ENCODE measurements at regions of chr5 and their contacts with region 1.

Region 1: DNA sequence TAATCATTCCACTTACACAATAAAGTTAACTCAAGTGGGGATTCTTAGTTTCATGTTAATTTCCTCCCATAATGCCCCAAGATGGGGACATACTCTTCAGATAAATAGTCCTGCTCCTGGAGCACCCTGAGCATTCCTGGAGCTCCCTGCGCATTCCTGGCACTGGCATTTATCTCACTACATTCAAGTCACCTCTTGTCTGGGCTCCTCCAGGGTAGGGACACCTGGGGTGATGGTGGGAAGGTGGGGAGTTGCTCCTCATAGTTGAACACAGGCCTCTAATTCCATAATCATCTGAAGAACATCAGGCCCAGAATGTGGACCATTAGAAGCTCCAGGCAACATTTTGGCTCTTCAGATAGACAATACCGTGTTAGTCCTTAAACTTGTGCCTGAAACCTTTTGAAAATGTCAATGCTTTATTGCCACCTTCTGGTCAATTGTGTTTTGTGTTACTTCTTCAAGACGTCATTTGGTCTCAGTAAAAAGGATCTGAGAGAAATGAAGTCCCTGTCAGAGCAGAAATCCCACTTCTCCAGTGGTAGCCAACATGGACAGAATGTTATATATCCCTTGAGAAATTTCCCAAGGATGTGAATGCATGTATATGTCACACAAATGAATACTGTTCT is 14.2 kb upstream of the AGGF1 start:
- DNase-seq: peak; percentile 26
- H3K27ac ChIP-seq: no peak overlapping the region
- CTCF ChIP-seq: peak; percentile 12; the same call in 1 of the 2 replicates

Region 2: DNA sequence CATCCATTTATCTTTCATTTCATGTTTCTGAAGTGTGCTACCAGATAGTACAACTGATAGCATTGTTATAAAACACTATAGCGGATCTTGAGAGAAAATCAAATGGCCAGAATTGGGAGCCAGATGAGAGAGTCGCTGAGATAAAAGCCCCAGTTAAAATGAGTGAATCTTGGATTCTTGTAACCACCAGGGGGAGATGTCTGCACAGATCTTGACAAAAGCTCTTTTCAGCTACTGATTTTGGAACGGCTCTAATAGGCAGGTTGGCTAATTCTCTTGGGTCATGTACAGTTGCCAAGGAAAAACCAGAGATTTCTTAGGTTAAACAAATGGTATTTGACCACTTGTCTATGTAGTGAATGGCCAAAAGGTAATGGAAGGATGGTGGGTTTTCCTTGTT is 414.6 kb before region 1 on chr5:
- CTCF ChIA-PET with region 1: interaction called, 10 read pairs
- POLR2A ChIA-PET with region 1: no interaction called
- DNase-seq: peak; percentile 80
- H3K27ac ChIP-seq: no peak overlapping the region
- CTCF ChIP-seq: peak; percentile 78

Region 3: GRCh38 chr5:76831110-76831452 is 185.0 kb before region 1 on chr5:
- CTCF ChIA-PET with region 1: interaction called, 11 read pairs
- POLR2A ChIA-PET with region 1: no interaction called
- DNase-seq: no peak
- H3K27ac ChIP-seq: no peak overlapping the region
- CTCF ChIP-seq: no peak

Region 4: DNA sequence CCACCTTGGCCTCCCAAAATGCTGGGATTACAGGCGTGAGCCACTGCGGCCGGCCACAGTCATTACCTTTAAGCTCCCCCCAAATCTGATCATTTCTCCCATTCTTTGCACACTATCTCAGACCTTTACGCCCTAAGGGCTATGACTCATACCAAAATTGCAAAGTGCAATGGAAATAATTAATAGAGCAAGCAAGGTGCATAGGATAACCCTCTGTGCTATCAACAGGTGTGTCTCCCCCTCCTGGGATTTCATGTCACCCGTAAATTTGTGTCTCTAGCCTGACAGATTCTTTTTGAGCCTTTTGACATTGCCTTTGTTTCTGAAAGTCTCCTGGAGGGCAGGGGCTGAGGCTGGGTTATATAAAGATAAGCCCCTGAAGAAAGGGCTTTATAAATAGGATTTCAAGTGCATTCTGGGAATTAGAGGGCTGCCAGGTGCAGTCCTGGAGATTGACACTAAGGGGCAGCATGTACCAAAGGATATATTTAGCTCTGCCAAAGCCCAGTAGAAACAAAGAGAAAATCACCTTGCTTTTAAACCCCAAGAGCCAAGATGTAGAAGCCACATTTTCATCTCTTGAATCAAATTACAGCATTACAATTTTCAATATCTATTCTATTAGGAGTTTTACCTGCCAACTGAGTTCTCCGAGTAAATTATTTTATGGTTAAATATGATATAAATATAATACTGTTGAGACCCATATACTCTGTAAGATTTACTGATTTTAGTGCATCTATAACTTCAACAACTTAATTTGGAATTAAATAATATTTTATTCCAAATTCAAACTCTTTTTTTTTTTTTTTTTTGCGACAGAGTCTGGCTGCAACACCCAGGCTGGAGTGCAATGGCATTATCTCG is 148.0 kb before region 1 on chr5:
- CTCF ChIA-PET with region 1: interaction called, 29 read pairs
- POLR2A ChIA-PET with region 1: interaction called, 3 read pairs
- DNase-seq: peak; percentile 82
- H3K27ac ChIP-seq: no peak overlapping the region
- CTCF ChIP-seq: peak; percentile 90

Region 5: GRCh38 chr5:77168161-77168875 is 152.3 kb after region 1 on chr5:
- CTCF ChIA-PET with region 1: no interaction called
- POLR2A ChIA-PET with region 1: no interaction called
- DNase-seq: no peak
- H3K27ac ChIP-seq: no peak overlapping the region; the same call in 1 of the 2 replicates
- CTCF ChIP-seq: no peak

Measured in RWPE1 (cell line).